ENCODE measurements at regions of chr3 and their contacts with region 1.

Region 1: DNA sequence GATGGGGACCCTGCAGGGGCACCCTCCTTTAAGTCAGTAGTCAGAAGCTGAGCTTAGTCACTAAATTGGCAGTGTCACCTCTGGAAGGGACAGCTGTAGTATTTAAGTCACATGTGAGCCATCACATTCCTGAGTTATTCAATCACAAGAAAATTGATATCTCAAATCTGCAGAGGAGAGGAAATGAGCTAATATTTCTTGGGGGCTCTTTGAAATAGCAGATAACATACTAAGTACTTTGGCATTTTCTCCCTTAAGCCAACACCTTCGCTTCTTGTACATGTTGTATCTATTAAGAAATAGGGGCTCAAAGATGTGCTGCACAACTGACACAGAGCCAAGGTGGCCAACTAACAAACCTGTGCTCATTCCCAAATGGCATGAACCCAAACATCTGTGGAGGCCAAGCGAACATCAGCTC is 63.1 kb downstream of the ABHD5 start:
- DNase-seq: no peak
- H3K4me3 ChIP-seq: no peak overlapping the region
- H3K27ac ChIP-seq: no peak overlapping the region
- H3K4me1 ChIP-seq: no peaks in the 10 kb centered on the region
- H3K27me3 ChIP-seq: no peaks in the 10 kb centered on the region
- CTCF ChIP-seq: no peak
- POLR2A ChIP-seq: no peak

Region 2: DNA sequence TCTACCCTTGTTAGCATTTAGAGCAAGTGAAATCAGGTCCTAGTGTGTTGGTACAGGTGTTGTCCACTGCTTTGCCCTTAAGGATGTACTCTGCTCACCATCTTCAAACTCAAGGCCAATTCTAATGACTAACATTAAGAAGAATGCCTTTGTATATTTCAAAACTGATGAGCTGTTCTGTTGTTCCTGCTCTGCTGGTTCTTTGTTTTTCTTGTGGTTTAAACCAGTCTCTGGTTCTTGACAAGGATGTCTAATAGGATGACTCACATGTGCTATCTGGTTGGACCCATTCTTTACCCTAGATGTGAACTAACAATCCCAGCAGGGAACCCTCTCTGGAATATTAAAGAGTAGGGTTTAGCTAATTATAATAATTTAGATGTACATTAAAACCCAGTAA is 45.8 kb before region 1 on chr3:
- intact Hi-C with region 1: loop called (anchors 1 kb)
- DNase-seq: no peak
- H3K4me3 ChIP-seq: no peak overlapping the region
- H3K27ac ChIP-seq: peak overlapping the region; percentile 49 to 66
- H3K4me1 ChIP-seq: no peaks in the 10 kb centered on the region
- H3K27me3 ChIP-seq: no peaks in the 10 kb centered on the region
- CTCF ChIP-seq: no peak
- POLR2A ChIP-seq: no peak

Measured in breast epithelium (tissue), 4 donors.